Endothelial cell of umbilical vein (primary cell): ENCODE measurements at regions of chr2 and their contacts with region 1.

Region 1: GRCh38 chr2:37168217-37168981 is 11.6 kb upstream of the EIF2AK2 start:
- DNase-seq: peak; percentile 56
- H3K4me3 ChIP-seq: no peak overlapping the region
- H3K27ac ChIP-seq: no peak overlapping the region
- H3K4me1 ChIP-seq: no peaks in the 10 kb centered on the region
- H3K27me3 ChIP-seq: no peaks in the 10 kb centered on the region
- CTCF ChIP-seq: peak; percentile 57 to 64
- POLR2A ChIP-seq: no peak

Region 2: DNA sequence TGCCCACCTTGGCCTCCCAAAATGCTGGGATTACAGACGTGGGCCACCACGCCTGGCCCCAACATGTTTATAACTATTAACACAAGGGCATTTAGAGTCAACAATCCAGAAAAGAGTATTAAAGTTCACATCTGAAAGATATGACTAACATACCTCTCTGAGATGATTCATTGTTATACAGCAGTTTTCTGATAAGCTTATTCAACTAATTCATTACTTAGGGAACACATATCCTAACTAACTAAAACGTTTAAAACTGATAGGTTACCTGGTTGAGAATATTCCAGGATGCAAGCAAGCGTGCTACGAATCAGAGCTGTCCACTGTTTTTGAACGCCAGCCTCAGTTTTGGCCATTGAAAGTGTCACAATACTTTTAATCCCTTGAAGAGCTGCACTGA is 168.1 kb before region 1 on chr2:
- CTCF ChIA-PET with region 1: no interaction called
- POLR2A ChIA-PET with region 1: no interaction called
- dilution Hi-C with region 1: no loop called
- intact Hi-C with region 1: no loop called
- DNase-seq: peak; percentile 24
- H3K4me3 ChIP-seq: no peak overlapping the region
- H3K27ac ChIP-seq: peak overlapping the region; percentile 31
- H3K4me1 ChIP-seq: peaks cover 10% of the 10 kb centered on the region
- H3K27me3 ChIP-seq: no peaks in the 10 kb centered on the region
- CTCF ChIP-seq: no peak
- POLR2A ChIP-seq: no peak

Region 3: DNA sequence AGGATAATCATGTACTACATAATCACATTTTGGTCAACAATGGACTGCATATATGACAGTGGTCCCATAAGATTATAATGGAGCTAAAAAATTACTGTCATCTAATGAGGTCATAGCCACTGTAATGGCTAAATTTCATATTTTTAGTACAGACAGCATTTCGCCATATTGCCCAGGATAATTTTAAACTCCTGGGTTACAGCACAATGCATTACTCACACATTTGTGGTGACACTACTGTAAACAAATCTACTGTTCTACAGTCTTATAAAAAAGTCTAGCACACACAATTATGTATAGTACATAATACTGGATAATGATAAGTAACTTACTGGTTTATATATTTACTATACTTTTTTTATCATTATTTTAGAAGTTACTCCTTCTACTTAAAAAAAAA is 24.4 kb before region 1 on chr2:
- CTCF ChIA-PET with region 1: no interaction called
- POLR2A ChIA-PET with region 1: no interaction called
- dilution Hi-C with region 1: no loop called
- intact Hi-C with region 1: no loop called
- DNase-seq: no peak
- H3K4me3 ChIP-seq: no peak overlapping the region
- H3K27ac ChIP-seq: no peak overlapping the region
- H3K4me1 ChIP-seq: no peaks in the 10 kb centered on the region
- H3K27me3 ChIP-seq: no peaks in the 10 kb centered on the region
- CTCF ChIP-seq: no peak
- POLR2A ChIP-seq: no peak

Region 4: GRCh38 chr2:37196320-37197195 is 28.2 kb after region 1 on chr2 and contains the start of gene CEBPZOS:
- CTCF ChIA-PET with region 1: interaction called, 14 read pairs
- POLR2A ChIA-PET with region 1: no interaction called
- dilution Hi-C with region 1: no loop called
- intact Hi-C with region 1: no loop called
- DNase-seq: peak; percentile 89
- H3K4me3 ChIP-seq: peak within 1 kb of the TSS; percentile 45 to 71 (median 50)
- H3K27ac ChIP-seq: peak within 1 kb of the TSS; percentile 56
- H3K4me1 ChIP-seq: peaks cover 6% of the 10 kb centered on the region
- H3K27me3 ChIP-seq: no peaks in the 10 kb centered on the region
- CTCF ChIP-seq: no peak
- POLR2A ChIP-seq: peak; percentile 56
- total RNA-seq, gene CEBPZOS: 36.3 and 41.5 TPM in 2 replicates

Region 5: GRCh38 chr2:37231241-37232130 is 63.1 kb after region 1 on chr2 and contains the starts of genes CEBPZ and NDUFAF7:
- CTCF ChIA-PET with region 1: no interaction called
- POLR2A ChIA-PET with region 1: no interaction called
- dilution Hi-C with region 1: no loop called
- intact Hi-C with region 1: loop called (anchors 1 kb)
- DNase-seq: peak; percentile 96
- H3K4me3 ChIP-seq: peak within 1 kb of the TSS; percentile 83 to 96 (median 90)
- H3K27ac ChIP-seq: peak within 1 kb of the TSS; percentile 79
- H3K4me1 ChIP-seq: peaks cover 22% of the 10 kb centered on the region
- H3K27me3 ChIP-seq: no peaks in the 10 kb centered on the region
- CTCF ChIP-seq: no peak
- POLR2A ChIP-seq: peak; percentile 85
- total RNA-seq, gene CEBPZ: 36.7 and 46.9 TPM in 2 replicates
- total RNA-seq, gene NDUFAF7: 17.7 and 23.4 TPM in 2 replicates

Region 6: DNA sequence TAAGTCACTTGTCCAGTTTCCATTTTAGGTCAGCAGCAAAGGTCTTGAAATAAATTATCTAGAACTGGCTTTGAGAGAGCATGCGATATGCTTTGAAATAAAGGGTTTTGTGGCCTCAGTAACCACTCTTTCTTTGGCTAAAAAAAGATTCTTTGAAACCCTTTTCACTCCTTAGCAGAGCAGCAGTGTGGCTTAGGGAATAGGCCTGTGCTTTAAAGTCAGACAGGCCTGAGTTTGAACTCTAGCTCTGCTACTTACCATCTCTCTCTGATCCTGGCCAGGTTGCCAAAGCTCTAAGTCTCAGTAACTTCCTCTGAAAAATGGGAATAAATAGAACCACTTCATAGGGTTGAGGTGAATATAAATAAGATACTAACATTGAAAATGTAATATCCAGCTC is 228.8 kb after region 1 on chr2:
- CTCF ChIA-PET with region 1: interaction called, 4 read pairs
- POLR2A ChIA-PET with region 1: no interaction called
- dilution Hi-C with region 1: no loop called
- intact Hi-C with region 1: loop called (anchors 2 kb)
- DNase-seq: no peak
- H3K4me3 ChIP-seq: no peak overlapping the region
- H3K27ac ChIP-seq: no peak overlapping the region
- H3K4me1 ChIP-seq: peaks cover 3% of the 10 kb centered on the region
- H3K27me3 ChIP-seq: no peaks in the 10 kb centered on the region
- CTCF ChIP-seq: no peak
- POLR2A ChIP-seq: no peak

Region 7: DNA sequence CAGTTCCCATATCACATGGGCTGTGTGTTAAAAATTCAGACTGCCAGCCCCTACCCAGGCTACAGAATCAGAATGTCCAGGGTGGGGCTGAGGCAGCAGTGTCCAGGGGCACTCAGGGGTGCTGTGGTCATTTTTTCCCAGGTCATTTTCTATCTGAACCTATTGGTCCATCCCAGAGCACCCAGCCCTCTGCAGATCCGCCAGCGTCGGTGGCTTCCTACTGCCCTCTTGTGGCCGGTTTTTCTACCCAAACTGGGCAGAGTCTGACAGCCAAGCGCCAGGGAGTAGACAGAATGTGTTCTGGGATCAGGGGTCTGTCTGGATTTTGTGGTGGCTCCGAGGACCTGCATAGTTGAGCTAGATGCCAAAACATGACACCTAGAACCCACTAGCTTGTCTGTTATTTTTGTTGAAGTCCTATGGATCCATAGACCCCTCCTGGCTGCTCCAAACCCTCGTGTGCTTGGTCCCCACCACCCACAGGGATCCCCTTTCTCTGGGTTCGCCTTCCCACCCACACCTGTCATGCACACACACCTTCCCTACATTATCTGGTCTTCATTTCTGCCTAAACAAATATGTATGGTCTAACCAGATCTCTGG is 722.6 kb after region 1 on chr2:
- CTCF ChIA-PET with region 1: no interaction called
- POLR2A ChIA-PET with region 1: interaction called, 5 read pairs
- dilution Hi-C with region 1: no loop called
- intact Hi-C with region 1: loop called (anchors 1 kb)
- DNase-seq: peak; percentile 69
- H3K4me3 ChIP-seq: no peak overlapping the region
- H3K27ac ChIP-seq: no peak overlapping the region
- H3K4me1 ChIP-seq: no peaks in the 10 kb centered on the region
- H3K27me3 ChIP-seq: no peaks in the 10 kb centered on the region
- CTCF ChIP-seq: peak; percentile 76 to 79
- POLR2A ChIP-seq: no peak